ENCODE measurements at regions of chr6 and their contacts with region 1.

Region 1: DNA sequence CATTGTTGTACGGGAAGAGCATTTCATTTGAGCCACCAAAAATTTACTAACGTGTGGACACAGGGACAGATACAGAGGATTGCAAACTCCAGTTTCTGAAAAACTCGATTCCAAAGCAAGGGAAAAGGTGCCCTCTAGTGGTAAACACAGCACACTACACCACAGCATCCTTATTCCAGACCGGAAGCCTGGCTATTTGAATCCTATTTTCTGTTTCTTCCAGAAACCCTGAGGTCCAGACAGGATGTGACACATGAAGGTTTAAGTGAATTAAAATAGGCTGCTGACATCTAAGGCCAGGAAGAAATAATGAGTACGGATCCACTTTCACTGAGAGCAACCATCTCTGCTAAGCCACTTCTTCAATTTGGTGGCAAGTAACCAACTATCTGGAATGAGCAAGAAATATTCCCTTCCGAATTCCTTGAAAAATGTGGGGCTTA is 31.8 kb upstream of the GMPR start:
- DNase-seq: peak; percentile 90
- H3K4me3 ChIP-seq: no peak overlapping the region
- H3K27ac ChIP-seq: peak overlapping the region; percentile 75
- H3K4me1 ChIP-seq: peaks cover 14% of the 10 kb centered on the region
- H3K27me3 ChIP-seq: no peaks in the 10 kb centered on the region
- CTCF ChIP-seq: peak; percentile 84 to 94
- POLR2A ChIP-seq: no peak

Region 2: DNA sequence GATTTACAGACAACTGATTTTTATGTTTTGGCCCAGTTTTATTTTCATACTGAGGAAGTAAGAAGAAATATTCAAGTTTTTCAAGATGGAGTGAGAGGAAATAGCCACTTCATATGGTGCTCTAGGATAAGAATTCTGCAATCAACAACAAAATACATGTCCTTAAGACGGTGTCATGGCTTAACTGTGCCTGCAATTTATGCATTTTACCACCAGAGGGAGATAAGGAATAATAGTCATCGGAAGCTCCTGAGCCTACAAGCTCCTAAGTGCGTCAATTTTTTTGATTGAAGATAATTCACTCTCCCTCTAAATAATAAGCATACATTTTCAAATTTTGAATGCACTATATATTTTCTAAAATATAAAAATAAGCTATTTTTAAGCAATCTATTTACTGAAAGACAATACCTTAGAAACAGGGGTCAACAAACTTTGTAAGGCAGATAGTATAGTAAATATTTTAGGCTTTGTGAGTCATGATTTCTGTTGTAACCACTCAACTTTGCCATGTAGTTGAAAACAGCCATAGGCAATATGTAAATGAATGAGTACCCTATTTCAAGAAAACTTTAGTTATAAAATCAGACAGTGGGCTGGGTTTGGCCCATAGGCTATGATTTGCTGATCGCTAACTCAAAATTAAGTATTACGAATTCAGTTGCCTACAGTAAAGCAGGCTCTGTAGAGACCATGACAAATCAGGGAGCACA is 312.9 kb before region 1 on chr6:
- CTCF ChIA-PET with region 1: no interaction called
- POLR2A ChIA-PET with region 1: no interaction called
- dilution Hi-C with region 1: no loop called
- intact Hi-C with region 1: loop called (anchors 2 kb)
- DNase-seq: peak; percentile 50
- H3K4me3 ChIP-seq: no peak overlapping the region
- H3K27ac ChIP-seq: no peak overlapping the region
- H3K4me1 ChIP-seq: peaks cover 18% of the 10 kb centered on the region
- H3K27me3 ChIP-seq: no peaks in the 10 kb centered on the region
- CTCF ChIP-seq: peak; percentile 34 to 42
- POLR2A ChIP-seq: no peak

Region 3: GRCh38 chr6:16078064-16078463 is 128.6 kb before region 1 on chr6:
- CTCF ChIA-PET with region 1: no interaction called
- POLR2A ChIA-PET with region 1: no interaction called
- dilution Hi-C with region 1: no loop called
- intact Hi-C with region 1: no loop called
- DNase-seq: no peak
- H3K4me3 ChIP-seq: no peak overlapping the region
- H3K27ac ChIP-seq: no peak overlapping the region
- H3K4me1 ChIP-seq: no peaks in the 10 kb centered on the region
- H3K27me3 ChIP-seq: peaks cover 3 to 5% of the 10 kb centered on the region in 2 experiments
- CTCF ChIP-seq: no peak
- POLR2A ChIP-seq: no peak

Region 4: GRCh38 chr6:16168858-16169257 is 37.8 kb before region 1 on chr6:
- CTCF ChIA-PET with region 1: interaction called, 5 read pairs
- POLR2A ChIA-PET with region 1: no interaction called
- dilution Hi-C with region 1: no loop called
- intact Hi-C with region 1: loop called (anchors 1 kb)
- DNase-seq: peak; percentile 79
- H3K4me3 ChIP-seq: no peak overlapping the region
- H3K27ac ChIP-seq: no peak overlapping the region
- H3K4me1 ChIP-seq: no peaks in the 10 kb centered on the region
- H3K27me3 ChIP-seq: peaks cover 3% of the 10 kb centered on the region in 2 experiments
- CTCF ChIP-seq: peak; percentile 27 to 67
- POLR2A ChIP-seq: no peak

Region 5: GRCh38 chr6:16238057-16238962 is 31.7 kb after region 1 on chr6 and contains the start of gene GMPR:
- CTCF ChIA-PET with region 1: interaction called, 10 read pairs
- POLR2A ChIA-PET with region 1: interaction called, 3 read pairs
- dilution Hi-C with region 1: no loop called
- intact Hi-C with region 1: loop called (anchors 2 kb)
- DNase-seq: peak; percentile 81
- H3K4me3 ChIP-seq: peak within 1 kb of the TSS; percentile 63 to 97 (median 73)
- H3K27ac ChIP-seq: peak within 1 kb of the TSS; percentile 75
- H3K4me1 ChIP-seq: peaks cover 32% of the 10 kb centered on the region
- H3K27me3 ChIP-seq: no peaks in the 10 kb centered on the region
- CTCF ChIP-seq: no peak
- POLR2A ChIP-seq: no peak
- total RNA-seq, gene GMPR: 36.3 and 43.2 TPM in 2 replicates

Region 6: DNA sequence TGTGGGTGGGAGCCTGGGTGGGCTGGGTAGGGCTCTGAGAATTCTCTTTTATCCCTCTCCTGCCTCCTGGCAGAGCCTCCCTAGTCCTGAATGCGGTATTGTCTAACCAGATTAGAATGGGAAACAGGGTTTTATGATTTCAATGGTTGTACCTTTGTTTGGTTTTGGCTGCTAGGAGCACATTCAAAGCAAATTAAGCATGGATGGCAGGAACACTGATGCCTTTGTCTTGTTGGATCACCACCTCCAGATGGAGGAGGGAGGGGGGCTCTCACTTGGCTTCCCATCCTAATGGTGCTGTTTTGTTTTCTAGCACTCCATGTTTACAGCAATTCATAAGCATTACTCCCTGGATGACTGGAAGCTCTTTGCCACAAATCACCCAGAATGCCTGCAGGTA is 43.4 kb after region 1 on chr6:
- CTCF ChIA-PET with region 1: no interaction called
- POLR2A ChIA-PET with region 1: no interaction called
- dilution Hi-C with region 1: no loop called
- intact Hi-C with region 1: no loop called
- DNase-seq: no peak
- H3K4me3 ChIP-seq: no peak overlapping the region
- H3K27ac ChIP-seq: no peak overlapping the region
- H3K4me1 ChIP-seq: no peaks in the 10 kb centered on the region
- H3K27me3 ChIP-seq: no peaks in the 10 kb centered on the region
- CTCF ChIP-seq: no peak
- POLR2A ChIP-seq: no peak

Region 7: GRCh38 chr6:16608444-16608843 is 401.8 kb after region 1 on chr6:
- CTCF ChIA-PET with region 1: no interaction called
- POLR2A ChIA-PET with region 1: no interaction called
- dilution Hi-C with region 1: no loop called
- intact Hi-C with region 1: no loop called
- DNase-seq: no peak
- H3K4me3 ChIP-seq: no peak overlapping the region
- H3K27ac ChIP-seq: no peak overlapping the region
- H3K4me1 ChIP-seq: no peaks in the 10 kb centered on the region
- H3K27me3 ChIP-seq: no peaks in the 10 kb centered on the region
- CTCF ChIP-seq: no peak
- POLR2A ChIP-seq: no peak

Measured in endothelial cell of umbilical vein (primary cell).